Prostate gland (tissue), 2 donors: ENCODE measurements at regions of chr18 and their contacts with region 1.

Region 1: DNA sequence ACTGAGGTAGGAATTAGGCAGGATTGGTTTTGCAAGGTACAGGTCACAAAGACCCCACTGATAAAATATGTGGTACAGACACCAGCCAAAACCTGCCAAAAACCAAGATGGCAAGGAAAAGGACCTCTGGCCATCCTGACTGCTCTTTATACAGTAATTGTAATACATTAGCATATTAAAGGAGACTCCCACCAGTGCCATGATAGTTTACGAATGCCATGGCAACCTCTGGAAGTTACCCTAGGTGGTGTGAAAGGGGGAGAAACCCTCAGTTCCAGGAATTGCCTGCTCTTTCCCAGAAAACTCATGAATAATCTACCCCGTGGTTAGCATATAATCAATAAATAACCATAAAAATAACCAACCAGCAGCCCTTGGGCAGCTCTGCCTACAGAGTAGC is 129.8 kb upstream of the EPB41L3 start:
- DNase-seq: no peak
- H3K4me3 ChIP-seq: no peak overlapping the region
- H3K27ac ChIP-seq: no peak overlapping the region
- H3K4me1 ChIP-seq: no peaks in the 10 kb centered on the region
- H3K27me3 ChIP-seq: no peaks in the 10 kb centered on the region
- CTCF ChIP-seq: no peak
- POLR2A ChIP-seq: no peak

Region 2: DNA sequence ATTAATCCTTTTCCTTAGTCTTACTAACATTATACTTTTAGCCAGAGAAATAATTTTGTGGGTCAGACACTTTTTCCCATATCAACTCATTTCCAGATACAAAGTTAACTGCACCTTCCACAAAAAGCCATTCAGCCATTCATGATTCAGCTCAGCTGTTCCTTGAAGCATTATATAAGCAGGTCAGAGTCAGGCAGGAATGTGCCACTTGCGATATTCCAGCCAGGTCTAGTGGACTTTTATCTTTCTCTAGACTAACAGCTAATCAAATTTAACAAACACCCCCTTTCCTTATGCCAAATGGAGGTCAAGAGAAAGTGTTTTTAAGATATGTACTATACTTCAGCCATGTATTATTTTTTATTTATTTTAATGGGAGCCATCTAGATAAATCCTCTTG is 54.2 kb before region 1 on chr18:
- intact Hi-C with region 1: loop called (anchors 10 kb)
- DNase-seq: no peak
- H3K4me3 ChIP-seq: no peak overlapping the region
- H3K27ac ChIP-seq: no peak overlapping the region
- H3K4me1 ChIP-seq: no peaks in the 10 kb centered on the region
- H3K27me3 ChIP-seq: no peaks in the 10 kb centered on the region
- CTCF ChIP-seq: no peak
- POLR2A ChIP-seq: no peak